ENCODE measurements at regions of chr17 and their contacts with region 1.

Region 1: GRCh38 chr17:12180644-12181261 is 160.1 kb downstream of the MAP2K4 start:
- DNase-seq: no peak

Region 2: DNA sequence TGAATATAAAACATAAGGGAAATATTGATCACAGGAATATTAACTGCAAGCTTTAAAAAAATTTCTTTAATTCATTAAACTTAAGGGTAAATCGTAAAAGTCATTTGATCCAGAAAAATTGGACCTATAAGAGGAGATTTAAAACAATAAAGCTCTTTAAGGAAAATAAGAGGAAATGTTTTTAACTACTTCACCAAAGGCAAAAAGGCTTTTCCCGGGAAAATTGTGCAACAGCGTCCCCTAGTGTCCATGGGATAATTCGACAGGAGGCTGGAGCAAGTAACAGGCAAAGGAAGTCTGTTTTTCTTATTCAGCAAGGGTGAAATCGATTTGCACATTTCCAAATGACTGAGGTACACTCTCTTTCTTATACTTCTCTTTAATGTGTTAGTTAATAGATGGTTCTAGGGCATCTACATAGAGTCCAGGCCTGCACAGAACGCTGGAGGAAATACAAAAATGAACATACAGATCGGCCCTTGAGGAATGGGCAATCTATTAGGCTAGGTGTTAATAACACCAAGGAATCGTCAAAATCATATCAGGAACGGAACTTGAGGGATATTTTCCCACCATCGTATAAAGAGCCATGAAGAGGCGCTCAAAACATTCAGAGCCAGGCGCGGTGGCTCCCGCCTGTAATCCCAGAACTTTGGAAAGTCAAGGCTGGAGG is 244.9 kb before region 1 on chr17:
- intact Hi-C with region 1: no loop called
- DNase-seq: no peak

Region 3: GRCh38 chr17:12230481-12231354 is 50.0 kb after region 1 on chr17:
- intact Hi-C with region 1: no loop called
- DNase-seq: no peak

Region 4: DNA sequence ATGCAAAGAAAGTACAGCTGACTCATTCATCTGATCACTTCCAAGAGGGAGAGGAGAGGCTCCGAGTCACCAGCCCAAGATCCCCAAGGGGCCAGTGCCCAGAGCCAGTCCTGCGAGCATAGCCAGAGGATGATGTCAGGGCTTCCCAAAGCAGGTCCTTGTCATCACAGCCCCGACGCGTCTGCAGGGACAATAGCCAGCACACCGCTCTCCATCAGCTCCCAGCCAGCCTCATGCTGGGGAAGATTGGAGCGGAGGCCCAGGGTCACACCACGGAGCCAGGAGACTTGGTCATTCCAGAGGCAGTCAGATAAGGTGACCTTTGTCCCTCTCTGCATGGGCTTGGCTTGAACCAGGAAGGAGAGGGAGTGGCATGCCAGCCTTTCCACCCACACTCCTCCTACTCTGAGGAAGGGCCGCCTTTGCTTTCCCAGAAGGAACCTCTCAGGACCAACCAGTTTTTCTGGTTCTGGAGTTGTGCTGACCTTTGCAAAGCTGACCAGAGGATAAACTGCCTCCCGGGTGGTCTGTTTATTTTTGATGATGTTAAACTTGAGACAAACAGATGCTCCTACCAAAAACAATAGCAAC is 550.3 kb after region 1 on chr17:
- intact Hi-C with region 1: loop called in 1 of 2 experiments (anchors 10 kb)
- DNase-seq: peak; percentile 94

Region 5: GRCh38 chr17:13002766-13003451 is 822.2 kb after region 1 on chr17:
- intact Hi-C with region 1: loop called (anchors 5 to 10 kb)
- DNase-seq: peak; percentile 94

Measured in posterior vena cava (tissue), 2 donors.